ENCODE measurements at regions of chr16 and their contacts with region 1.

Region 1: DNA sequence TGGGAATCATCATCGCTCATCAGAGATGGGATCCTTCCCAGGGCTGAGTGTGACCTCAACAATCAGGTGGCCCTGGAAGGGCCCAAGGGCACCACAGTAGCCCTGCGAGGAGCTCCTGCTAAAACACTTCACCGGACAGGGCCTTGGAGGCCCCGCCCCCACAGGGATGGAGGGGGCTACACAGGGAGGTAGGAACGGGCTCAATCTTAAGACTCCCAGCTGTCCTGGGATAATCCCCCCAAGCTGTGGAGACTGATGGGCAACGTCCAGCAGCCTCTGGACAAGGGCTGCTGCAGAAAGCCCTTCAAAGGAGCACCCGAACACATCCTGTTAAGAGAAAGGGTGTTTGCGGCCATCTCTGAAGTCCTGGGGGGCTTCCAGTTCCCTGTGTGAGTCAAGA is 60.4 kb downstream of the ZNF423 start:
- DNase-seq: no peak
- H3K4me3 ChIP-seq: no peak overlapping the region
- H3K27ac ChIP-seq: no peak overlapping the region
- H3K4me1 ChIP-seq: peaks cover 0 to 12% (median 3%) of the 10 kb centered on the region in 4 experiments; a peak in 6 of 7 replicates
- H3K27me3 ChIP-seq: no peaks in the 10 kb centered on the region
- CTCF ChIP-seq: no peak
- EP300 ChIP-seq: no peak
- POLR2A ChIP-seq: no peak
- RAD21 ChIP-seq: no peak

Region 2: GRCh38 chr16:49674351-49674851 is 121.1 kb before region 1 on chr16:
- CTCF ChIA-PET with region 1: no interaction called
- POLR2A ChIA-PET with region 1: no interaction called
- DNase-seq: no peak
- H3K4me3 ChIP-seq: no peak overlapping the region
- H3K27ac ChIP-seq: no peak overlapping the region
- H3K4me1 ChIP-seq: no peaks in the 10 kb centered on the region
- H3K27me3 ChIP-seq: no peaks in the 10 kb centered on the region
- CTCF ChIP-seq: no peak
- EP300 ChIP-seq: no peak
- POLR2A ChIP-seq: no peak
- RAD21 ChIP-seq: no peak

Region 3: GRCh38 chr16:49701789-49702494 is 93.6 kb before region 1 on chr16:
- CTCF ChIA-PET with region 1: no interaction called
- POLR2A ChIA-PET with region 1: no interaction called
- DNase-seq: peak in 1 of 2 experiments; percentile 74
- H3K4me3 ChIP-seq: peak overlapping the region in 3 of 4 experiments; percentile 3 to 47 (median 21); a peak in 4 of 8 replicates
- H3K27ac ChIP-seq: peak overlapping the region; percentile 79; the same call in 1 of the 2 replicates
- H3K4me1 ChIP-seq: peaks cover 51 to 66% (median 57%) of the 10 kb centered on the region in 4 experiments
- H3K27me3 ChIP-seq: no peaks in the 10 kb centered on the region
- CTCF ChIP-seq: no peak
- EP300 ChIP-seq: peak in 1 of 2 experiments; percentile 97; a peak in 2 of 3 replicates
- POLR2A ChIP-seq: no peak
- RAD21 ChIP-seq: no peak

Region 4: GRCh38 chr16:49781401-49781800 is 14.1 kb before region 1 on chr16:
- CTCF ChIA-PET with region 1: interaction called, 25 read pairs
- POLR2A ChIA-PET with region 1: interaction called, 4 read pairs
- DNase-seq: no peak
- H3K4me3 ChIP-seq: no peak overlapping the region
- H3K27ac ChIP-seq: no peak overlapping the region
- H3K4me1 ChIP-seq: peaks cover 0 to 8% (median 7%) of the 10 kb centered on the region in 4 experiments
- H3K27me3 ChIP-seq: no peaks in the 10 kb centered on the region
- CTCF ChIP-seq: no peak
- EP300 ChIP-seq: no peak
- POLR2A ChIP-seq: no peak
- RAD21 ChIP-seq: no peak